Caco-2 (cell line): ENCODE measurements at regions of chr2 and their contacts with region 1.

Region 1: DNA sequence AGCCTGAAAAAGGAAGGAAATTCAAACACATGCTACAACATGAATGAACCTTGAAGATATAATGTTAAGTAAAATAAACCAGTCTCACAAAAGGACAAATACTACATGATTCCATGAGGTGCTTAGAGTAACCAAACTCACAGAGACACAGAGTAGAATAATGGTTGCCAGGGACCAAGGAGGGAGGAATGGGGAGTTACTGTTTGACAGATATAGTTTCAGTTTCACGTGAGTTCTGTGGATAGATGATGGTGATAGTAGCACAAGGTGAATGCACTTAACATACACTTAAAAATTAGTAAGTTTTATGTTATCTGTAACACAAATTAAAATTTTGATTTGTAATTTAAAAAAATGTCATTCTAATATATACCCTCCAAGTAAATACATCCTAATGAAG is 106.9 kb upstream of the ACVR1C start:
- DNase-seq: no peak
- H3K4me3 ChIP-seq: no peak overlapping the region
- H3K4me3 Mint-ChIP-seq: no peak overlapping the region
- H3K27ac Mint-ChIP-seq: no peak overlapping the region
- H3K4me1 ChIP-seq: peaks cover 27% of the 10 kb centered on the region
- H3K4me1 Mint-ChIP-seq: peaks cover 7% of the 10 kb centered on the region
- H3K27me3 ChIP-seq: no peaks in the 10 kb centered on the region
- H3K27me3 Mint-ChIP-seq: no peaks in the 10 kb centered on the region
- CTCF ChIP-seq: no peak

Region 2: DNA sequence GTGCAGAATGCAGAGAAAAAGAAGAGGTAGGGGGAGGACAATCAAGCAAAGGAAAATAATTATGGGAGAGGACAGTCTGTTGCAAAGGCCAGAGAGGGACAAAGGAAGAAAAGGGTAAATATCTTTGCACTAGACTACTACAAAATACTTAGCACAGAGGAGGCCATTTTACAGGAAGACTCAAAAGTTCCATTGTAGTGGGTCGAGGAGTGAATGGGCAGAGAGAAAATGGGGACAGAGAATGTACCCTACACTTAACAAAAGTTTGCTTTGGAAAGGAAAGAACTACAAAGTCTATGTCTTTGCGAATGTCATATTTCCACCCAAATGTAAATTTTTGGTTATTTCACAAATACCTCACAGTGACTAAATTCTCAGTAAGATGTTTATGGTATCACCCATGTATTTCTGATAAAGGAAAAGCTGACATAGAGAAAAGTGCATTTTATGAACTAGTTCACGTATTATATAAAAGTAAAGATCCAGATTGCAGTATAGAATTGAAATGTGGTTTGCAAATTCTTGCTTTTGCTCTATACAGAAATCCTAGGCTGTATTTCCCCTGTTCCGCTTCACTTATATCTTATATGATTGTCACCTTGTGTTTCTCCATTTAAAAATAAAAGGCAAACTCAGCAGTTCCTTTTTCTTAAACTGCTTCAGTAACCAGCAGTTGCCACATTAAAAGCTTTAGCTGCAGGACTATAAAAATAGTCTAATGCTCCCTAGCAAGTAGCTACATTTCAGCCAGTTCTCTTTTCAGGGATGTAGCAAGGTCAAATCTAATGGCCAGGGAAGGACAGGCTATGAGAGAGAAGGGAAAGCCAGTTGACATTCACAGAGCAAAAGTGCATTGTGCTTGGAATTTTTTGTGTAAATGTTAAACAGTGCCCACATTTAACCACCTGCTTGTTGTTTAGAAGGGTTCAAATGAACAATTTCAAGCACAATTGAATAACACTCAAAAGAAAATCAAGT is 212.0 kb before region 1 on chr2:
- CTCF ChIA-PET with region 1: no interaction called
- POLR2A ChIA-PET with region 1: no interaction called
- intact Hi-C with region 1: loop called (anchors 5 kb)
- DNase-seq: no peak
- H3K4me3 ChIP-seq: no peak overlapping the region
- H3K4me3 Mint-ChIP-seq: no peak overlapping the region
- H3K27ac Mint-ChIP-seq: no peak overlapping the region
- H3K4me1 ChIP-seq: no peaks in the 10 kb centered on the region
- H3K4me1 Mint-ChIP-seq: no peaks in the 10 kb centered on the region
- H3K27me3 ChIP-seq: no peaks in the 10 kb centered on the region
- H3K27me3 Mint-ChIP-seq: peaks cover 7% of the 10 kb centered on the region
- CTCF ChIP-seq: no peak

Region 3: GRCh38 chr2:157587576-157587975 is 148.0 kb before region 1 on chr2:
- CTCF ChIA-PET with region 1: no interaction called
- POLR2A ChIA-PET with region 1: no interaction called
- intact Hi-C with region 1: no loop called
- DNase-seq: no peak
- H3K4me3 ChIP-seq: no peak overlapping the region
- H3K4me3 Mint-ChIP-seq: no peak overlapping the region
- H3K27ac Mint-ChIP-seq: no peak overlapping the region
- H3K4me1 ChIP-seq: no peaks in the 10 kb centered on the region
- H3K4me1 Mint-ChIP-seq: no peaks in the 10 kb centered on the region
- H3K27me3 ChIP-seq: no peaks in the 10 kb centered on the region
- H3K27me3 Mint-ChIP-seq: peaks cover 3% of the 10 kb centered on the region
- CTCF ChIP-seq: no peak